ENCODE measurements at regions of chr7 and their contacts with region 1.

Region 1: DNA sequence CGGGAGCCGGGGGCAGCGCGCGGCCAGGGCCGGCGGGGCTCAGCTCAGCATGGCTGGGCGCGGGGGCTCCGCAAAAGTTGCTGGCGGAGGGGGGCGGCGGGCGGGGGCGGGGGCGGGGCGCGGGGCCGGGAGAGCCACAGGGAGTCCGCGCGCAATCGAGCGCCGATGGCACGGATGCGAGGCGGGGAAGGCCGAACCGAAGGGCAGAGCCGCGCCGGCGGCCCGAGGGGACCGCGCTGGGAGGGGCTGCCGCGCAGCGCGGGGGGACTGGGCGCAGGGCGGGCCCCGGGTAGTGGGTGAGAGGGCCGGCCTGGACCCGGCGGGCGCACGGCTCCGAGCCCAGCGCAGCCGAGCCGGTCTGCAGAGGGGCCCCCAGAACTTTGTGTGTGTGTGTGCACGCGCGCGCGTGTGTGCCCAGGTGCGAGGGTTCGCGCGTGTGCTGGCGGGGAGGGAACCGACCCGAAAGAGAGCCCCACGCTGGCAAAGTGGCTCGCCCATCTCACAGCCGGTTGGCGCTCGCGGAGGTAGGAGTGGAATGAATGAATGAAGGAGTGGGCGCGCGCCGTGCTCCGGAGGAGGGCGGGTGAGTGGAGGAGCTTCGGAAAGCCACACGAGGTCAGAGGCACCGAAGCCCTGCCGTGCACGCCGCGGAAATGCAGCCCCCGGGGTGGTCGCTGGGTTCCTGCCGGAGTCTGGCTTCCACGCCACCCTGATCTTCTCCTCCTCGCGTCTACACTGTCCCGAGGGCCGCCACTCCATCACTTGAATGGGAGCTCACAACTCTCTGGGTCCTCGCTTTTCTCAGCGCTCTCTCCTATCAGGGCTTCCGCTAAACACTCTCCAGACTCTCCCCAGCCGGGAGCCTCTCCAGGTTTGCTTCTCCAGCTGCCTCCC is at the start of gene HIPK2:
- DNase-seq: peak; percentile 91
- ATAC-seq: peak; percentile 85
- total RNA-seq, gene HIPK2: 97.8 TPM

Region 2: GRCh38 chr7:139645572-139646523 is 132.3 kb before region 1 on chr7:
- intact Hi-C with region 1: loop called (anchors 1 kb)
- DNase-seq: peak; percentile 79
- ATAC-seq: peak; percentile 61

Region 3: GRCh38 chr7:139702811-139703486 is 75.2 kb before region 1 on chr7:
- intact Hi-C with region 1: loop called (anchors 5 kb)
- DNase-seq: no peak
- ATAC-seq: peak; percentile 60

Region 4: DNA sequence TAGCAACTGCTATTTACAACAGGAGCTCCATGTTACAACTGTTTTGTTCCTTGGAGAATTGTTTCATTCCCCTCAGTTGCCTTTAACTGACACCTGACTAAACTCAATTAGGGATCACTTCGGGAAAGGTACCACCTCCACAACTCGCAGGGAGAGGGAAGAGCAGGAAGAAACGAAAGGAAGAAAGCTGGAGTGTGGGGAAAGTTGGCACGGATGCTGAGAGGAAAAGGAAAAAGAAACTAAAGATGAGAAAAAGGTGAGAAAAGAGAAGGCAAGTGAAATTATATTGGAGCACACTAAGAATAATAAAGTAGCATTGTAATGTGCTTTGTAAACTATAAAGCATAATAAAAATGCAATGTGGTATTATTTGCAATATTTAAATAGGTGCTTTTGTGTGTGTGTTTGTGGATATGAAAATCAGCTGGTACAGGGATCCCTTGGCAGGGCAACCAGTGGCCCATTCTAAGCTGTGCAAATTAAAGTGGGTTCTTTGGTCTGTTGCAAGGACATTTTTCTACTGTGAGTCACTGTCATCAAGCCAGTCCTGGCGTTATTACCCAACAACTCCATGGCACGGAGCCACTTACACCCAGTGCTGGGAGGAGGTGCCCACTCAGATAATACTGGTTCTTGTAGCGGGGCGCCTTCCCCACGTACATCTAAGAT is 46.3 kb before region 1 on chr7:
- intact Hi-C with region 1: loop called (anchors 5 kb)
- DNase-seq: peak; percentile 82
- ATAC-seq: peak; percentile 77